Transverse colon (tissue), 4 donors: ENCODE measurements at regions of chr18 and their contacts with region 1.

Region 1: DNA sequence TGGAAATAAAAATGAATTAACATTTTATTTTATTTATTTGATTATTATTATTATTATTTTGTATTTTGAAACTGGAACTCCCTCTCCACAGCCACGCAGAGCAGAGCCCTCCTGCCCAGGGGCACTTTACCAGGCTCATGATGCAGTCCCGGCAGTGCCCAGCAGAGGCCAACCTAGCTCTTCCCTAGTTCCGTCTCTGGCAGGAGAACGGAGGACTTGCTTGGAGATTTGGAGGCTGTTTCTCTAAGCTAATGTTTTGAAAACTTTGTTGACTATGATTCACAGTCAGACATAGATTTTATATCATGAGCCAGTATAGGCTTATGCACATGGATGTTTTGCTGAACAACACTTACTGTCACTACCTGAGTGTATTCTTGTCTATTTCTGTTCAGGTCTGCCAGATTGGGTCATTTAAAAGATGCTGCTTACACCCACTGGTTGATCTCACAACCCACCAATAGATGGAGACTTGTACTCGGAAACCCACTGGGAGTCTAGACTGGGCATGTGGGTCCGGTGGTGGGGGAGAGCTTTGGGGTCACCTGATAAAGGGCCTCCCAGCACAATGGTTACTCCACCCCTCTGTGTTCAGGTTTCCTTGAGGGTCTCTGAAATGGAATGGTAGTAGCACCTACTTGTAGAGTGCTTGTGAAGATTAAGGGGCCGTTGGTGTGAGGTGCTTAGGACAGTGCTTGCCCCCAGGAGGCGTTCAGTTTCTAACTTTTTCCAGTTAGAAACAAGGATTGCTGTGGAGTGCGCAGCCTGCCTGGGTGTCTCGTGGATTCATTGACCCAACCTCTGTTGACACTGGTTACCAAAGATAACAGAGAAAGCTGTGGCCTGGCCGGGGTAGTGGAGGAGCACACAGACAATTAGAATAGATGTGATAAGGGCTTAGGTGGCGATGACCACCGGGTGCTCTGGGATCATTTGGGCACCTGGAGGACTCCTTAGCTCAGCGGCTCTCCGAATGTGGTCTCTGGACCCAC is 177.3 kb downstream of the HAUS1 start:
- DNase-seq: peak; percentile 44
- H3K4me3 ChIP-seq: no peak overlapping the region
- H3K27ac ChIP-seq: no peak overlapping the region
- H3K4me1 ChIP-seq: no peaks in the 10 kb centered on the region
- H3K27me3 ChIP-seq: no peaks in the 10 kb centered on the region
- CTCF ChIP-seq: peak; percentile 79 to 91 (median 85)
- EP300 ChIP-seq: no peak
- POLR2A ChIP-seq: no peak

Region 2: DNA sequence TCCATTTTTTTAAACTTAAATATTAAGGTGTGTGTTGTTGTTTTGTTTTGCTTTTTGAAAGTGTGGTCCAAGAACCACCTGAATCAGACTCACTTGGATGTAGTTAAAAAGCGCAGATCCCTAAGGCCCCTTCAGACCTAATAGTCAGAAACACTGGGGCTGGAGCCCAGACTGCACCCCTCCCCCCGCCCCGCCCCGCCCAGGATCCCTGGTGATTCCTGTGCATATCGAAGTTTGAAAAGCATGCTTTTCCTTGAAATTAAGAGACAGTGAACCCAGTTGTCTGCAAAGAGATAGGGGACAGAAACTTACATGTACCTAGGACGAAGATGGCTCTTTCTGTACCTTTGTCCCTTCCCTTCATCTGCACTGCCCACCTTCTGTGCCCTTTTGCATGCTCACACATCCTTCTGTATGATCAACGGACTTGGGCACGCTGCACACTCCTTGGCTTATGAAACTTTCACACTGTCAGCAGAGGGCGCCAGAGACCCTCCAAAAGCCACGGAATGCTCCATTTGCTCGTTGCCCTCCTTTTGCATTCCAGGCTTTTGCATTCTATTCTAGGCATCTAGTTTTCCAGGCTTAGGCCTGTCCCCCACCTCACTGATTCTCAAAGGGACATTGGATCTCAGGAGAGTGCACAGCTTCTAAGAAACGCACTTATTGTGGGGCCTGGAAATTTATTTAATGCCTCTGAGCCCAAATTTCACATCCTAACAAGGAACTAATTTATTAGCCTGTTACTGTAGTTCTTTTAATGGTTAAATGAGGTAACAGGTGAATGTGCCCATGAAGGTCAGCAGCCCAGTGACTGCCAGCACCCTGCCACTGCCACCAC is 590.3 kb before region 1 on chr18:
- in situ Hi-C with region 1: no loop called
- intact Hi-C with region 1: no loop called
- DNase-seq: peak; percentile 79
- H3K4me3 ChIP-seq: no peak overlapping the region
- H3K27ac ChIP-seq: no peak overlapping the region
- H3K4me1 ChIP-seq: peaks cover 0 to 5% (median 0%) of the 10 kb centered on the region in 4 donors
- H3K27me3 ChIP-seq: no peaks in the 10 kb centered on the region
- CTCF ChIP-seq: peak; percentile 66 to 80 (median 73)
- EP300 ChIP-seq: no peak
- POLR2A ChIP-seq: no peak

Region 3: GRCh38 chr18:46474487-46475389 is 193.3 kb after region 1 on chr18:
- in situ Hi-C with region 1: loop called in 2 of 4 experiments (anchors 10 to 25 kb)
- intact Hi-C with region 1: no loop called
- DNase-seq: no peak
- H3K4me3 ChIP-seq: no peak overlapping the region
- H3K27ac ChIP-seq: no peak overlapping the region
- H3K4me1 ChIP-seq: no peaks in the 10 kb centered on the region
- H3K27me3 ChIP-seq: no peaks in the 10 kb centered on the region
- CTCF ChIP-seq: no peak
- EP300 ChIP-seq: no peak
- POLR2A ChIP-seq: no peak

Region 4: DNA sequence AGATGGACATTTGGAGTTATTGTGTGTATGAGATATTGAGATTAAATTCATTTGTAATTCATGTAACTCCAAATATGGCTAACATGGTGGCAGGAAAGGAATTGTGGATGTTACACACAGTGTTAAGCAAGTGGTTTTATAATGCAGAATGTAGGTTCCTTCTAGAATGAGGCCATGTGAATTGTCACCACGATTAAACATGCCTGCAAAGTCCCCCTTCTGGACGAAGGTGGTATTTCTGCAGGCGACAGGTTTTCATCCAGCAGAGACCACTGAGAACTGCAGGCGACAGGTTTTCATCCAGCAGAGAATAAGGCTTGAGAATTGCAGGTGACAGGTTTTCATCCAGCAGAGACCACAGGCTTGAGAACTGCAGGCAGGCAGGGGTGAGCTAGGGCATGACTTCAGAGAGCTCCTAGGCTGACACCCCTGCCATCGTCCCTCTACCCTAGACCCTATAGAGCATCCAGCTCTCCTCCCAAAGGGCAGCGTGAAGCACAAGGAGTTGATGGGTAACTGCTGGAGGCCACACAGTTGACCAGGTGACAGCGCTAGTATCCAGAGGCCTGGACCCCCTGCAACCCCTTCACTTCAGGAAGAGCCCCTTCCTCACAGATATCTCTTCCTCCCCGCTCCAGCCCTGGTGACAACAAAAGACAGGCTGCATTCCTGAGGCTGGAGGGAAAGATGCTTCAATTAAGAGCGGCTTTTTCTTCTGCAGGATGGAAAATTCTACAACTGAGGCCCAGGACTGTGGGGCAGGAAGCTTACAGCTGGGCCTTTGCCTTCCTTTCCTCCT is 199.8 kb after region 1 on chr18:
- in situ Hi-C with region 1: loop called (anchors 10 to 25 kb)
- intact Hi-C with region 1: no loop called
- DNase-seq: peak; percentile 44
- H3K4me3 ChIP-seq: no peak overlapping the region
- H3K27ac ChIP-seq: no peak overlapping the region
- H3K4me1 ChIP-seq: no peaks in the 10 kb centered on the region
- H3K27me3 ChIP-seq: no peaks in the 10 kb centered on the region
- CTCF ChIP-seq: peak; percentile 71 to 77 (median 75)
- EP300 ChIP-seq: no peak
- POLR2A ChIP-seq: no peak